Endothelial cell of umbilical vein (primary cell): ENCODE measurements at regions of chr1 and their contacts with region 1.

Region 1: DNA sequence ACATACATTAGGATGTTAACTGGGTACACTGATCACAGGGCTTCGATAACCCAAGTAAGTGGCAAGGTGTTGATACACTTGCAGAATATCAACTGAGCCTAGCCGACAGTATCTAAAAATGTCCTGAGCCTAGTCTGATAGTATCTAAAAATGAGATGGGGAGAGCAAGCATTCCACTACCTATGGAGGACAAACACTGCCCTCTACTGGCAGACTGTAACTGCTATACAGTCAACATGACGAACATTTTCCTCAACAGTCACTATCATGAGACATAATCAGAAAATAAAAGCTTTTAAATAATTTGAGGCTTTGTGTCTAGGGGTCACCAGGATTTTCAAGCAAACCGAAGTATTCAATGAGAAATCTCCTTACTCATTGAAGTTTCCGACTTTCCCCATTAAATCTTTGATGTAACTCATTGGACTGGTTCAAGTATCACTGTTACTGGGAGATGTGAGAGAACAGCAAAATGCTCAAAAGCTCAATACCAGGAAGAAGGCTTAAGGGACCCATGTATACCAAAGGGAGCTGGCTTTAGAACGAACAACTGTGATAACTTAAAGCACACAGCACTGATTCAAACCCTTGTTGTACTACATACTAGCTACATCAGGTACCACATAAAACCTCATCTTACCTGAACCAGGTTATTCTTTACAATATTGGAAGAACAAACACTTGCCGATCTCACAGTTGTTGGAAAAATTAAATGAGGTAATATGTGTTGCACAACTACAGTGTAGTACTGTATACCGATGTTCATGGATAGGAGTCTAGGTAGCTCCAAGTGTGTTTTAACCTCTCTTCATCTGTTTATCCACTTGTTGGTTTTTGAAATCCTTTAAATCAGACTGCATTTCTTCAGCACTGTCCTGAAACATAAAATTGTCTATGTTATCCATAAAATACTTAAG is 31.1 kb upstream of the SLC45A3 start:
- DNase-seq: peak; percentile 88
- H3K4me3 ChIP-seq: no peak overlapping the region
- H3K27ac ChIP-seq: peak overlapping the region; percentile 44
- H3K4me1 ChIP-seq: peaks cover 12% of the 10 kb centered on the region
- H3K27me3 ChIP-seq: no peaks in the 10 kb centered on the region
- CTCF ChIP-seq: peak; percentile 67 to 70
- POLR2A ChIP-seq: no peak

Region 2: GRCh38 chr1:204254031-204254661 is 1457.2 kb before region 1 on chr1:
- CTCF ChIA-PET with region 1: no interaction called
- POLR2A ChIA-PET with region 1: no interaction called
- dilution Hi-C with region 1: no loop called
- intact Hi-C with region 1: no loop called
- DNase-seq: no peak
- H3K4me3 ChIP-seq: no peak overlapping the region
- H3K27ac ChIP-seq: no peak overlapping the region
- H3K4me1 ChIP-seq: no peaks in the 10 kb centered on the region
- H3K27me3 ChIP-seq: no peaks in the 10 kb centered on the region
- CTCF ChIP-seq: no peak
- POLR2A ChIP-seq: no peak

Region 3: DNA sequence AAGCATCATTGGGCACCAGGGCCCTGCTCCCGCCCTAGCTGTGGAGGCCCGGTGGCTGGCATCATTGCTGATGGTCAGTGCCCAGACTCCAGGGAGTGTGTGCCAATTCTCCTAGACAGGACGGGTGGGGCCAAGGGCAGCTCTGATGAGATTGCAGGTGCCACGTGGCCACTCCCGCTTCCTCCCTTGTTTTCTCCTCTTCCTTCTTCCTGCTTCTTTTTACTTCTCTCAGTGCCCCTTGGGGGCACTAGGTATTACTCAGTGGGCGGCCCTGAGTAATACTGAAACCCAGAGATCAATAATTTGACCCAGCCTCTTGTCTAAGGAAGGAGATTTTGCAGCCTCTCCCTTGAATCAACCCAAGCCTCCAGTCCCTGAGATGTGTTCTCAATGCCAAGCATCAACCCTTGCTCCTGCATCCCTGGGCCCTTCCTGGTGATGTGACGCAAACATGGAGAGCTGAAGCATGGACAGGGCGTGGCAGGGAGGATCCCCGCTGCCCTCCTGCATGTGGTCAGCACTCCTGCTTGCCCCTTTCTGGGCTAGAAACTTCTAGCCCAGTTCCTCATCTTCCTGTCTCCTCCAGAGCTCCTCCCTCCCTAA is 174.5 kb before region 1 on chr1:
- CTCF ChIA-PET with region 1: interaction called, 4 read pairs
- POLR2A ChIA-PET with region 1: interaction called, 3 read pairs
- dilution Hi-C with region 1: no loop called
- intact Hi-C with region 1: loop called (anchors 5 kb)
- DNase-seq: no peak
- H3K4me3 ChIP-seq: no peak overlapping the region
- H3K27ac ChIP-seq: no peak overlapping the region
- H3K4me1 ChIP-seq: peaks cover 3% of the 10 kb centered on the region
- H3K27me3 ChIP-seq: no peaks in the 10 kb centered on the region
- CTCF ChIP-seq: no peak
- POLR2A ChIP-seq: no peak

Region 4: GRCh38 chr1:205600085-205600484 is 111.3 kb before region 1 on chr1:
- CTCF ChIA-PET with region 1: interaction called, 139 read pairs
- POLR2A ChIA-PET with region 1: no interaction called
- dilution Hi-C with region 1: no loop called
- intact Hi-C with region 1: no loop called
- DNase-seq: peak; percentile 94
- H3K4me3 ChIP-seq: peak overlapping the region in 1 of 3 experiments; percentile 12
- H3K27ac ChIP-seq: peak overlapping the region; percentile 98
- H3K4me1 ChIP-seq: peaks cover 41% of the 10 kb centered on the region
- H3K27me3 ChIP-seq: no peaks in the 10 kb centered on the region
- CTCF ChIP-seq: peak; percentile 16 to 23
- POLR2A ChIP-seq: no peak

Region 5: DNA sequence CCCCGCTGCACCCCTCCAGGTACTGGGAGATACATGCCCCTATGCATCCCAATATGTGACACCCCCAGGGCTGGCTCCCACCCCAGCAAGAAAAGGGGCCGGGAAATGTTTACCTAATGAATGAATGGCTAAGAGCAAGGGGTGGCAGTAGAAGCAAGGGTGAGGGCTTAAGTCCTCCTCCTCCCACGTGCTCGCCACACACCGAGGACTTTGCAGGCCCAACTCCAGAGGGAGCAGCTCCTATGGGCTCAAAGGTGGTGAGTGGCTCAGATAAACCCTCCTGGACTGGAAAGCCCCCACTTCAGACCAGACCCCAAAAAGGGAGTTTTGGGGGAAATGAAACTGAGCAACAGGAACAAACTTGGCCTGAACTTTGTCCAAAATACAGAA is 42.4 kb before region 1 on chr1:
- CTCF ChIA-PET with region 1: interaction called, 908 read pairs
- POLR2A ChIA-PET with region 1: interaction called, 3 read pairs
- dilution Hi-C with region 1: no loop called
- intact Hi-C with region 1: no loop called
- DNase-seq: no peak
- H3K4me3 ChIP-seq: no peak overlapping the region
- H3K27ac ChIP-seq: no peak overlapping the region
- H3K4me1 ChIP-seq: peaks cover 35% of the 10 kb centered on the region
- H3K27me3 ChIP-seq: no peaks in the 10 kb centered on the region
- CTCF ChIP-seq: no peak
- POLR2A ChIP-seq: no peak

Region 6: DNA sequence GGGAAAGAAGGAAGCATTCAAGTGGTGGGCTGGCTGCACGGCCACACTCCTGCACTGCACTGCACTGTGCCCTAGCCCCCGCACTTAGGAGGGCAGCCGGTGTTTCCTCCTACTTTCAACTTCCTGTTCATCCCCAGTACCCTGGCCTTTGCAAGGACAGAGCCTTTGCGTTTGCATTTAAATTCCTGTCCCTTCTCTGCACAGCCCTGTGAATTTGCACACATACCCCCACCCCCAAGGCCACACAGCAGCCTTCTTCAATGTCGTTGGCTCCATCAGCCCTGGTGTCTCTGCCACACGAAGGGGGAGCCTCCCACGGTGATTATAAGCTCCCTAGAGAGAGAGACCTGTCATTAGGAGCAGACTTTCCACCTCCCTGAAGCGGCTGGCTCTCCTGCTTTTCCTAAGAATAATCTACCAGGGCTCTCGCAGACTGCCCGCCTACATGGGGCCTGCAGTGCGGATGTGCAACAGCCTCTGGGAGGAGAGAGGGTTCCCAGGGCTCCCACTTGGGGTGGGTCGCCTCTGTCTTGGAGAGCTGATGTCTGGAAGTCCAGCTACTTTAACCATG is 17.9 kb before region 1 on chr1:
- CTCF ChIA-PET with region 1: interaction called, 11 read pairs
- POLR2A ChIA-PET with region 1: no interaction called
- dilution Hi-C with region 1: no loop called
- intact Hi-C with region 1: no loop called
- DNase-seq: no peak
- H3K4me3 ChIP-seq: no peak overlapping the region
- H3K27ac ChIP-seq: no peak overlapping the region
- H3K4me1 ChIP-seq: no peaks in the 10 kb centered on the region
- H3K27me3 ChIP-seq: no peaks in the 10 kb centered on the region
- CTCF ChIP-seq: no peak
- POLR2A ChIP-seq: no peak

Region 7: GRCh38 chr1:205729945-205730610 is 18.7 kb after region 1 on chr1:
- CTCF ChIA-PET with region 1: interaction called, 47 read pairs
- POLR2A ChIA-PET with region 1: no interaction called
- dilution Hi-C with region 1: no loop called
- intact Hi-C with region 1: no loop called
- DNase-seq: no peak
- H3K4me3 ChIP-seq: no peak overlapping the region
- H3K27ac ChIP-seq: no peak overlapping the region
- H3K4me1 ChIP-seq: peaks cover 6% of the 10 kb centered on the region
- H3K27me3 ChIP-seq: no peaks in the 10 kb centered on the region
- CTCF ChIP-seq: no peak
- POLR2A ChIP-seq: no peak

Region 8: GRCh38 chr1:205907794-205908193 is 196.4 kb after region 1 on chr1:
- CTCF ChIA-PET with region 1: interaction called, 5 read pairs
- POLR2A ChIA-PET with region 1: no interaction called
- dilution Hi-C with region 1: no loop called
- intact Hi-C with region 1: loop called (anchors 5 kb)
- DNase-seq: peak; percentile 46
- H3K4me3 ChIP-seq: no peak overlapping the region
- H3K27ac ChIP-seq: no peak overlapping the region
- H3K4me1 ChIP-seq: no peaks in the 10 kb centered on the region
- H3K27me3 ChIP-seq: peaks cover 5 to 9% of the 10 kb centered on the region in 2 experiments
- CTCF ChIP-seq: peak; percentile 65 to 75
- POLR2A ChIP-seq: no peak